ENCODE measurements at regions of chr20 and their contacts with region 1.

Region 1: GRCh38 chr20:22691369-22692118 is 107.2 kb upstream of the FOXA2 start:
- DNase-seq: peak; percentile 73
- H3K4me3 ChIP-seq: no peak overlapping the region
- H3K27ac ChIP-seq: no peak overlapping the region
- H3K4me1 ChIP-seq: peaks cover 3 to 5% (median 4%) of the 10 kb centered on the region in 4 donors
- H3K27me3 ChIP-seq: no peaks in the 10 kb centered on the region
- CTCF ChIP-seq: peak; percentile 87 to 89 (median 88)
- EP300 ChIP-seq: no peak
- POLR2A ChIP-seq: no peak

Region 2: DNA sequence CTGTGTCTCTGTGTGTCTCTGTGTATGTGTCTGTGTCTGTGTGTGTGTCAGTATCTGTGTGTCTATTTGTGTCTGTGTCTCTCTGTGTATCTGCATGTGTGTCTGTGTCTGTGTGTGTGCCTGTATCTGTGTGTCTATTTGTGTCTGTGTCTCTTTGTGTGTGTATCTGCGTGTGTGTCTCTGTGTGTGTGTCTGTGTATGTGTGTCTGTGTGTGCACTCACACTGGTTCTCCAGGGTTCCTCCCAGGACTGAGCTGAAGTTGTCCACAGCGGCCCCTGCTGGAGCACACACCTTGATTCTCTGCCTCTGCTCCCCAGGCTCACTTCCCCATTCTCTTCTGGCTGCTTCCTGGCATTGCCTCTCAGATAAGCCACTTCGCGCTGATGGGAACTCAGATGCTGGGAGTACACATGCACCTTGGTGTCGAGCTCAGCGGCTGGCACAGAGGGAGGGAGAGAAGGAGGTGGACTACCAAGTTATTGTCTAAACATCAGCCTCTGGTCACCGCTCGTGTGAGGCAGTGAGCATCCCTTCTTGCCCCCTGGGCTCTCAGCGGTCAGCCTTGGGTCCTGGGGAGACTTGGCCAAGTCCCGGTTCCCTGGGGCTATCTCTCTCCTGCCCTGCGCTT is 554.1 kb after region 1 on chr20:
- in situ Hi-C with region 1: loop called in 2 of 4 experiments (anchors 25 kb)
- intact Hi-C with region 1: loop called (anchors 10 kb)
- DNase-seq: peak; percentile 48
- H3K4me3 ChIP-seq: no peak overlapping the region
- H3K27ac ChIP-seq: peak overlapping the region in 1 of 4 donors; percentile 43
- H3K4me1 ChIP-seq: no peaks in the 10 kb centered on the region
- H3K27me3 ChIP-seq: no peaks in the 10 kb centered on the region
- CTCF ChIP-seq: peak; percentile 20 to 40 (median 25)
- EP300 ChIP-seq: no peak
- POLR2A ChIP-seq: no peak

Region 3: GRCh38 chr20:23331450-23332350 is 640.2 kb after region 1 on chr20:
- in situ Hi-C with region 1: loop called in 1 of 4 experiments (anchors 10 kb)
- intact Hi-C with region 1: loop called (anchors 10 kb)
- DNase-seq: no peak
- H3K4me3 ChIP-seq: no peak overlapping the region
- H3K27ac ChIP-seq: no peak overlapping the region
- H3K4me1 ChIP-seq: no peaks in the 10 kb centered on the region
- H3K27me3 ChIP-seq: no peaks in the 10 kb centered on the region
- CTCF ChIP-seq: no peak
- EP300 ChIP-seq: no peak
- POLR2A ChIP-seq: no peak

Region 4: GRCh38 chr20:23340524-23340923 is 649.0 kb after region 1 on chr20:
- in situ Hi-C with region 1: loop called in 3 of 4 experiments (anchors 5 to 10 kb)
- intact Hi-C with region 1: loop called (anchors 10 kb)
- DNase-seq: peak; percentile 45
- H3K4me3 ChIP-seq: no peak overlapping the region
- H3K27ac ChIP-seq: no peak overlapping the region
- H3K4me1 ChIP-seq: no peaks in the 10 kb centered on the region
- H3K27me3 ChIP-seq: no peaks in the 10 kb centered on the region
- CTCF ChIP-seq: peak in 4 of 5 experiments; percentile 39 to 50 (median 43)
- EP300 ChIP-seq: no peak
- POLR2A ChIP-seq: no peak

Region 5: GRCh38 chr20:23606652-23607049 is 915.1 kb after region 1 on chr20:
- in situ Hi-C with region 1: loop called in 1 of 4 experiments (anchors 25 kb)
- intact Hi-C with region 1: no loop called
- DNase-seq: peak; percentile 78
- H3K4me3 ChIP-seq: no peak overlapping the region
- H3K27ac ChIP-seq: no peak overlapping the region
- H3K4me1 ChIP-seq: no peaks in the 10 kb centered on the region
- H3K27me3 ChIP-seq: no peaks in the 10 kb centered on the region
- CTCF ChIP-seq: peak; percentile 83 to 89 (median 84)
- EP300 ChIP-seq: no peak
- POLR2A ChIP-seq: no peak

Measured in transverse colon (tissue), 4 donors.